ENCODE measurements at regions of chr11 and their contacts with region 1.

Region 1: DNA sequence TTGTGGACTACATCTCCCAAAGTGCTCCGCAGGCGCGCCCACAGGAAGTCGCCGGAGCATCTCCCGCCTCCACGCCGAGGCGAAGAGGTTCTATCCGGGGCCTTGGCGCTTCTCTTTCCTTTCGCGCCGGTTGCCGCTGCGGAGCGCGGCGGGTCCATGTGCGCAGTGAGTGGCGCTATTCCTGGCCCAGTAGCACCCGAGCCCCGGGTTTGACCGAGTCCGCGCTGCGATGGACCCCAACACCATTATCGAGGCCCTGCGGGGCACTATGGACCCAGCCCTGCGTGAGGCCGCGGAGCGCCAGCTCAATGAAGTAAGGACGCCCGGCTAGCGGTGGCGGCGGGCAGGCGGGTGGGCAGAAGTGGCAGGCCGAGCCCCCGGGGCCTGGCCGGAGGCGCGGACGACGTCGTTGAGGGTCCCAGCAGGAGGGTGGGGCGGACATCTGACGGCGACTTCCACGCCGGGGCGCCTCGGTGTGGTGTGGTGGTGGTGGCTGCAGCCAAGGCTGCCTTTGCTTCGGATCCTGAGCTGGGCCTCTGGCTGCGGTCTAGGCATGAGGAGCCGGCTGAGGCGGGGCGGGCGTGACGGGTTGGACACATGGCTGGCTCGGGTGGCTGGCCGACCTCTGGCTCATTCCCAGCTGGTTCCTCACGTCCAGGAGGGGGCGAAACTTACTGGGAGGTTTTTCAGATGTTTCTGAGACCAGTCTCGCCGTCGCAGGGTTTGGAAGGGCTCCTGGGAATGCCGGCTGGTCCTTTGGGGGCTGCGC is at the start of gene IPO7:
- DNase-seq: peak; percentile 94
- H3K4me3 ChIP-seq: peak within 1 kb of the TSS; percentile 77 to 79
- H3K27ac ChIP-seq: peak within 1 kb of the TSS; percentile 88 to 97
- H3K4me1 ChIP-seq: peaks cover 0 to 4% of the 10 kb centered on the region in 2 experiments; a peak in 1 of 4 replicates
- H3K27me3 ChIP-seq: no peaks in the 10 kb centered on the region
- CTCF ChIP-seq: peak; percentile 56
- EP300 ChIP-seq: peak in 1 of 2 experiments; percentile 11; a peak in 1 of 4 replicates
- RAD21 ChIP-seq: peak; percentile 19; the same call in 1 of the 2 replicates
- polyA plus RNA-seq, gene IPO7: 25.4 and 34.8 TPM in 2 replicates

Region 2: GRCh38 chr11:9314291-9315036 is 70.3 kb before region 1 on chr11 and contains the start of gene TMEM41B:
- CTCF ChIA-PET with region 1: interaction called, 4 read pairs
- POLR2A ChIA-PET with region 1: interaction called, 19 read pairs
- DNase-seq: peak; percentile 99
- H3K4me3 ChIP-seq: peak within 1 kb of the TSS; percentile 77 to 82
- H3K27ac ChIP-seq: peak within 1 kb of the TSS; percentile 96 to 98
- H3K4me1 ChIP-seq: peaks cover 8 to 10% of the 10 kb centered on the region in 2 experiments; a peak in 3 of 4 replicates
- H3K27me3 ChIP-seq: no peaks in the 10 kb centered on the region
- CTCF ChIP-seq: 0 out of 2 replicates have a peak, but pooled peaks have one; percentile 15
- EP300 ChIP-seq: peak; percentile 10 to 34; a peak in 1 of 4 replicates
- RAD21 ChIP-seq: peak; percentile 32
- polyA plus RNA-seq, gene TMEM41B: 19.8 and 23.5 TPM in 2 replicates

Region 3: GRCh38 chr11:9851366-9851765 is 466.6 kb after region 1 on chr11:
- CTCF ChIA-PET with region 1: no interaction called
- POLR2A ChIA-PET with region 1: no interaction called
- DNase-seq: no peak
- H3K4me3 ChIP-seq: no peak overlapping the region
- H3K27ac ChIP-seq: no peak overlapping the region
- H3K4me1 ChIP-seq: peaks cover 0 to 7% of the 10 kb centered on the region in 2 experiments; a peak in 1 of 4 replicates
- H3K27me3 ChIP-seq: no peaks in the 10 kb centered on the region
- CTCF ChIP-seq: no peak
- EP300 ChIP-seq: no peak
- RAD21 ChIP-seq: no peak

Region 4: GRCh38 chr11:9951714-9952275 is 567.1 kb after region 1 on chr11:
- CTCF ChIA-PET with region 1: no interaction called
- POLR2A ChIA-PET with region 1: no interaction called
- DNase-seq: no peak
- H3K4me3 ChIP-seq: no peak overlapping the region
- H3K27ac ChIP-seq: no peak overlapping the region
- H3K4me1 ChIP-seq: no peaks in the 10 kb centered on the region
- H3K27me3 ChIP-seq: no peaks in the 10 kb centered on the region
- CTCF ChIP-seq: no peak
- EP300 ChIP-seq: no peak
- RAD21 ChIP-seq: no peak

Measured in SK-N-SH (cell line).